ENCODE measurements at regions of chr2 and their contacts with region 1.

Region 1: DNA sequence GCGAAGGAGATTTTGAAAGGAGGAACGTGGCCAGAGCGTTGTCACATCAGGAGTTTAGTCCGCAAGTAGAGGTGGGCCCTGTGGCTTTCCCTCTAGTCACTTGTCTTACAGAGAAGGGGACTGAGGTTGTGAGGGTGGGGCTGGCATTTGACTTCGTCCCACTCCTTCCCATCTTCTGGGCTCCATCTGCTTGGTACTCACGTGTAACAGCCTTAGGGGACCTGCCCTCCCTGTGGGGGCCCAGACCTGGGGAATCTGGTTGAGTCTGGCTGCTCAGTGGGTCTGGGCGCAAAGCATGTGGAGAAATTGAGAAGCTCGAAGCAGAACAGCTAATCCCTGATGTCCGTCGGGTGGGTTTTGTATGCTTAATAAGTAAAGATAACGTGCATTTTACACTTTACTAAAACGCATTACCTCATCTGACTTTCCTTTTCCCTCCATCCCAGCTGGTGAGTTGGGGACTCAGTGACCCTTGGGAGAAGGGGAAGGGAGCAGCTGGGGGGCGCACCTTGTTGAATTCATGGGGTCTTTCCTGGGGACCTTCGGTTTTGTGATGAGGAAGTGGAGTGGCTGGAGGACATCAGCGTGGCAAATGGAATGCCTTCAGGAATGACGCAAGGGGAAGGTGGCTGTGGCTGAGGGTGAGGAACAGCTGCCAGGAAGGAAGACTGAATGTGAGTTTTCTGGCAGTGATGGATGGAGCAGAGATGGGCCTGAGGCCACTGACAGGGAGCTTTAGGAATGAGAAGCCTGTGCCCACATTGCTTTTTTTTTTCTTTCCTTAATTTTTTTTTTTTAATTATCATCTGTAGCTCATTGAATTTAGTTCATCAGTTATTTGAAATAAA is 44.8 kb downstream of the ASAP2 start:
- DNase-seq: peak; percentile 81 to 94
- H3K4me3 ChIP-seq: peak overlapping the region; percentile 9; the same call in 1 of the 2 replicates
- H3K27ac ChIP-seq: peak overlapping the region; percentile 67
- H3K4me1 ChIP-seq: peaks cover 59% of the 10 kb centered on the region
- H3K27me3 ChIP-seq: no peaks in the 10 kb centered on the region
- CTCF ChIP-seq: no peak

Region 2: GRCh38 chr2:9152975-9153642 is 98.3 kb before region 1 on chr2:
- CTCF ChIA-PET with region 1: no interaction called
- POLR2A ChIA-PET with region 1: no interaction called
- intact Hi-C with region 1: no loop called
- DNase-seq: peak; percentile 12 to 70
- H3K4me3 ChIP-seq: peak overlapping the region; percentile 32; the same call in 1 of the 2 replicates
- H3K27ac ChIP-seq: peak overlapping the region; percentile 89
- H3K4me1 ChIP-seq: peaks cover 25% of the 10 kb centered on the region
- H3K27me3 ChIP-seq: no peaks in the 10 kb centered on the region
- CTCF ChIP-seq: no peak

Region 3: DNA sequence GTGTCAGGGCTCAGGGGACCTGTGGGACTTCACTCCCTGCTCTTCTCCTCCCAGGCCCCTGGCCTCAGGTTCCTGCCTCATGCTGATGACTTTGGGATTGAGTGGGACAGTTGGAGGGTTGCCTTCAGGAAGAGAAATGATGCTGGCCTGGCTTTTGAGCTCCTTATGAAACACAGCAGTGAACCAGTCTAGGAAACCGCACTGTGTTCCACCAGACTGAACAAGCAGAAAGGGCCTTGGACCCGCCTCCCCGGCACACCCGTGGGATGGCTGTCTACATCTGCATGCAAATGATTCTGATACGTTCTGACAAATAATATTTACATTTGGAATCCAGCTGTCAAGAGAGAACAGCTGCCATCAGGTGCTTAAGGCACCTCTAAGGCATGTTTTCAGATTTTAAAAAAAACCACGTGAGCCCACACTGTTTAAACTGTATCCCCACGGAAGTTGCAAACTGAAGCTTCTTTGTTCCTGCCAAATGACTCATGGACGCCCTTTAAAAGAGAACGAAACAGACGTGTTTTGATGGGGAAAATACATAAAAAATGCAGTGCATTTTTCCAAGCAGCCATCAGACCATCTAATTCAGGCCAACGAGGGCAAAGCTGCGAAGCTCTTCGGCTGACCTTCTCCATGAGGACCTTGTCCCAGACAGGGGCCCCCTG is 72.3 kb before region 1 on chr2:
- CTCF ChIA-PET with region 1: no interaction called
- POLR2A ChIA-PET with region 1: interaction called, 3 read pairs
- intact Hi-C with region 1: loop called (anchors 5 kb)
- DNase-seq: peak; percentile 54 to 89
- H3K4me3 ChIP-seq: peak overlapping the region; percentile 18; the same call in 1 of the 2 replicates
- H3K27ac ChIP-seq: peak overlapping the region; percentile 90
- H3K4me1 ChIP-seq: peaks cover 69% of the 10 kb centered on the region
- H3K27me3 ChIP-seq: no peaks in the 10 kb centered on the region
- CTCF ChIP-seq: no peak

Region 4: DNA sequence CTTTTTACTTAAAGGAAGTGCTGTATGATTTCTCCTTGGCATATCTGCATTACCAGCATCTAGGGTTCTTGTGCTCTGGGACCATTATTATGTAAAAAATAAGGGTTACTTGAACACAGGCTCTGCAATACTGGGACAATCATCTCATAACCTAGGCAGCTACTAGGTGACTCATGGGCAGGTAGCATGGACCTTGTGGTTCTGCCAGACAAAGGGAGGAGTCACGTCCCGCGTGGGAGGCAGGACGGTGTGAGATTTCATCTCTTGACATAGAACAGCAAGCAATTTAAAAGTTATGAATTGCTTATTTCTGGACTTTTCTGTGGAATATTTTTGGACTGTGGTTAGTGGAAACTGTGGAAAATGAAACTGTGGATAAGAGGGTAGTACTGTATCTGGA is 10.6 kb before region 1 on chr2:
- CTCF ChIA-PET with region 1: no interaction called
- POLR2A ChIA-PET with region 1: interaction called, 10 read pairs
- intact Hi-C with region 1: no loop called
- DNase-seq: peak in 1 of 2 experiments; percentile 26
- H3K4me3 ChIP-seq: no peak overlapping the region
- H3K27ac ChIP-seq: peak overlapping the region; percentile 19; the same call in 1 of the 2 replicates
- H3K4me1 ChIP-seq: peaks cover 72% of the 10 kb centered on the region
- H3K27me3 ChIP-seq: no peaks in the 10 kb centered on the region
- CTCF ChIP-seq: no peak

Region 5: DNA sequence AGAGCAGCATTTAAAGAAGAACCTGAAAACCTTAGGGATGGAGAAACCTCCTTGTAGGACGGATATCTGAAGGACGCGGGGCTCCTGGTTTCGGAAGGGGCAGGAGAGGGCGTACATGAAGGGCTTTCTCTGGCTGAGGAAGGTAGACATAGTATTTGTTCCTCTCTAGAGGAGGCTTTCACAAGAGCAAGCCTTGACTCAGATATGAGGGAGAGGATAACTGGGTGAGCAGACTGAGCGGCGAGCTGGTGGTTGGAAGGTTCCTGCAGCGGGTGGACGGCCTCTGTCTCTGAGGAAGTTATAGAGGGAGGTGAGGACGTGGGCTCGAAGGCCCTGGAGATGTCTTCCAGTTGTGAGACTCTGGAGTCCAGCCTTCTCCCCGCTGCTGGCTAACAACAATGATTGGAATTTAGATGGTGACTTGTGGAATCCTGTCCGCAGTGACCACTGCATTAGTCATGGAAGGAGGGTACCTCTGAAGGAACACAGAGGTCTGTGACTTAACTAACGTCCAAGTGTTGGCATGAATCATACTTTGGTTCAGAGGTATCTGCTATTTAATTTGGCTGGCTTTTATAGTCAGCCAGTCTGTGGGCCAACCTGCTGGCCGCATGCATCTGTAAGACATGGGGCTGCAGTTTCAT is 36.1 kb after region 1 on chr2:
- CTCF ChIA-PET with region 1: no interaction called
- POLR2A ChIA-PET with region 1: interaction called, 4 read pairs
- intact Hi-C with region 1: loop called (anchors 2 kb)
- DNase-seq: peak; percentile 83 to 100
- H3K4me3 ChIP-seq: peak overlapping the region; percentile 33; the same call in 1 of the 2 replicates
- H3K27ac ChIP-seq: peak overlapping the region; percentile 96
- H3K4me1 ChIP-seq: peaks cover 59% of the 10 kb centered on the region
- H3K27me3 ChIP-seq: no peaks in the 10 kb centered on the region
- CTCF ChIP-seq: no peak

Region 6: DNA sequence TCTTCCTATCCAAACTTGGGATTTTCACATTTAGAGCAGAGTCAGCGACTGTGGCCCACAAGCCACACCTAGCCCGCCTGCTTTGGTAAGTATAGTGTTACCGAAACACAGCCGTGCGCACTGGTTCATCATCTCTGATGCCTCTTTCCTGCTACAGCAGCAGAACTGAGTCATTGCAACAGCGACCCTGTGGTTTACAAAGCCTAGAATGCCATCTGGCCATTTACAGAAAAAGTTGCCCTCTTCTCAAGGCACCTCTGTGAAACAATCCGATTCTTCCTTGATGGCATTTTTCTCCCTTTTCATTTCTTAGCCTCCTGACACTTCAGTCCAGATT is 212.3 kb after region 1 on chr2:
- CTCF ChIA-PET with region 1: no interaction called
- POLR2A ChIA-PET with region 1: no interaction called
- intact Hi-C with region 1: no loop called
- DNase-seq: no peak
- H3K4me3 ChIP-seq: no peak overlapping the region
- H3K27ac ChIP-seq: no peak overlapping the region
- H3K4me1 ChIP-seq: no peaks in the 10 kb centered on the region
- H3K27me3 ChIP-seq: no peaks in the 10 kb centered on the region
- CTCF ChIP-seq: no peak

Region 7: GRCh38 chr2:9590641-9591040 is 339.3 kb after region 1 on chr2:
- CTCF ChIA-PET with region 1: no interaction called
- POLR2A ChIA-PET with region 1: no interaction called
- intact Hi-C with region 1: no loop called
- DNase-seq: no peak
- H3K4me3 ChIP-seq: no peak overlapping the region
- H3K27ac ChIP-seq: peak overlapping the region; percentile 30
- H3K4me1 ChIP-seq: peaks cover 18% of the 10 kb centered on the region
- H3K27me3 ChIP-seq: no peaks in the 10 kb centered on the region
- CTCF ChIP-seq: no peak

Region 8: GRCh38 chr2:10900216-10901109 is 1649.1 kb after region 1 on chr2:
- CTCF ChIA-PET with region 1: no interaction called
- POLR2A ChIA-PET with region 1: no interaction called
- intact Hi-C with region 1: no loop called
- DNase-seq: peak in 1 of 2 experiments; percentile 56
- H3K4me3 ChIP-seq: no peak overlapping the region
- H3K27ac ChIP-seq: peak overlapping the region; percentile 45
- H3K4me1 ChIP-seq: peaks cover 27% of the 10 kb centered on the region
- H3K27me3 ChIP-seq: no peaks in the 10 kb centered on the region
- CTCF ChIP-seq: peak; percentile 63